ENCODE measurements at regions of chr16 and their contacts with region 1.

Region 1: DNA sequence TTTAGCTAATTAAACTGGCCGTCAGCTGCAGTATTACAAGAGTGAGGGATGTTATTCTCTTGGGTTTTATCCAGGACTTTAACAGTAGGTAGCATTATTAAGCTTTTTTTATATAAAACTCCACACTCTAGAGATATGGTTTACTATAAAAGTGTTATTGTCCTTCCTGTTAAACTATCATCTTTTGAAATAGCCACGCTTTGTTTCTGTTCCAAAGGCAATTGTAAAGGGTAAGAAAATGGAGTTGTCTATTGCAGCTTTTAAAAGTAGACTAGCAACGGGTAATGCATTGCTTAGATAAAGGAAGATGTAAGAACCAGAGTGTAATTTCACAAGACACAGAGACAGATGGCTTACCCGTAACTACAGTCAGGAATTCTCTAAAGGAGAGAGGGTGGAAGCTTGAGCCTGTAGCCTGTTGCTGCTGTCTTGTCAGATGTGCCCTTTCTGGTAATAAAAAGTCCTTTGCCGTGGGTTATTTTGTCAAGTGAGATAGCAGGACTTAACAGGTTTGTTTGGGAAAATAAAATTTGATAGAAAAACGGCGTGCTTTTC is 56.4 kb downstream of the WWOX start:
- DNase-seq: no peak

Region 2: DNA sequence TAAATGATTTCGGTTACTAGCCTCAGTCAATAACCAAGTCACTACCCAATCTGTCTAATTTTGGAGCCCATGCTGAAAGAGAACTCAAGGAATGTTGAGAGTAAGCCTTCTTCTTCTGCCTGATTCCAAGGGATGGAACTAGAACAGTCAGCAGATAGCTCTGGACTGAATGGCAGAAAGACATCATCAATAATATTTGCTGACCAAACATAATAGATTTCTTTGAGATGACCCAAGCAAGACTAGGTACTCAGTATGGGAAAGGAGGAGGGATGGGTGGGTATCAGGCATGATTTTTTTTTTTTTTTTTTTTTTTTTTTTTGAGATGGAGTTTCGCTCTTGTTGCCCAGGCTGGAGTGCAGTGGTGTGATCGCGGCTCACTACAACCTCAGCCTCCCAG is 1548.6 kb before region 1 on chr16:
- intact Hi-C with region 1: loop called in 1 of 2 experiments (anchors 10 kb)
- DNase-seq: no peak

Region 3: DNA sequence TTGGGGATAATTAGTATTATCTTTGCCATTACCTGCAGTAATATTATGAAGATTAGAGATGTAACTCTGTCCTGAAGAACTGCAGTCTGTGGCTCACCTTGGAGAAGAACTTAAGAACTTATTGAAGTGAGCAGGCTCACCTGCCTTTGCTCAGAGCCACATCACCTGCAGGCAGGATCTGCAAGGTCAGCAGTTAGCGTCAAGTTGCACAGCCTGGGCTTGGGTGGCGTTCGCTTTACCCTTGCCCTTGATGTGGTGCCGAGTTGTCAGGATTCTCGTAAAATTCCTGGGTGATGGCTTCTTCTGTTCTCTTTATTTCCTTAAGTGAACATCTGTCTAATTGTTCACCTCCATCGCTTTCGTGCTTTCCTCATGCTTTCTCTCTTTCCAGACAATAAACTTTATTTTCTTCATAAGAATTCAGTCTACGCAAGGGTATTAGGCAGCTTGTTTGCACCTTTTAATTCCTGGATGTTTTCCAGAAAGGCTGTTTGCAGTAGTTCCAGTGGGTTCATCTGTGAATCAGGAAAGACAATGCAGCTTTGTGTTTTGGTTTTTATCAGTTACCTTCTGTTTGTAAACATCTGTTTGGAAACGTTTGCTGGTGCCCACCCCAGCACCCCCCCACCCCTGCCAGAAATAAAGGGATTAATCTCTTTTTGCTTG is 197.9 kb after region 1 on chr16:
- intact Hi-C with region 1: no loop called
- DNase-seq: no peak

Measured in posterior vena cava (tissue), 2 donors.